ENCODE measurements at regions of chr3 and their contacts with region 1.

Region 1: DNA sequence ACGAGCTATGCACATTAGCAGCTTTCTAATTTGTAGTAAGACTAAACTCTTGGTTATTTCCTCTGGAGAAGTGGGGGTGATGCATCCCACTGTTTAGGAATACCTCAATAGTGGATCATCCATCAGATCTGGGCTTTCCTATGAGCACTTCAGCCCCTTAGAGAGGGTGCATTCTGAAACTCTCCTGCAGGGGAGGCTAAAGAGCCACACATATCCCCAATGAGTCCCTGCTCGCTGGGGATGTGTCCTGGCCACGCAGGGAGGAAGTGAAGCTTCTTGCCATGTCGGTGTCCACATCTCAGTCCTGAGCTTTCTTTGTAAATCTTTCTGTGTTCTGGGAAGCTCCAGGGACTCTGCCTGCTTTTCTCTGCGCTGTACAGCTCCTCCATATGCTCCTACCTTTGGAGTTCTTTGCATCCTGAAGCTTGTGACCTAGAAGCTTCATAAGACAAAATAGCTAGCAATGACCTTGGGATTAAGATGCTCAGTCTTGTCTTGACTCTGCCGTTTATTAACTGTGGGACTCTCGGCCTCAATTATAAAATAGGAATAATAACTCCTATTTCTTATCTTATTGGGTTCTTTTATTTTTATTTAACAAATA is 28.3 kb upstream of the MASP1 start:
- DNase-seq: peak; percentile 74
- ATAC-seq: peak; percentile 81
- H3K4me3 Mint-ChIP-seq: no peak overlapping the region
- H3K27ac Mint-ChIP-seq: no peak overlapping the region
- H3K4me1 Mint-ChIP-seq: peaks cover 11% of the 10 kb centered on the region
- H3K27me3 Mint-ChIP-seq: peaks cover 25% of the 10 kb centered on the region

Region 2: GRCh38 chr3:186732169-186732766 is 587.5 kb before region 1 on chr3:
- CTCF ChIA-PET with region 1: no interaction called
- POLR2A ChIA-PET with region 1: no interaction called
- DNase-seq: no peak
- ATAC-seq: no peak
- H3K4me3 Mint-ChIP-seq: no peak overlapping the region
- H3K27ac Mint-ChIP-seq: no peak overlapping the region
- H3K4me1 Mint-ChIP-seq: peaks cover 4% of the 10 kb centered on the region
- H3K27me3 Mint-ChIP-seq: no peaks in the 10 kb centered on the region

Region 3: GRCh38 chr3:187223799-187224198 is 96.0 kb before region 1 on chr3:
- CTCF ChIA-PET with region 1: interaction called, 38 read pairs
- POLR2A ChIA-PET with region 1: no interaction called
- DNase-seq: no peak
- ATAC-seq: no peak
- H3K4me3 Mint-ChIP-seq: no peak overlapping the region
- H3K27ac Mint-ChIP-seq: no peak overlapping the region
- H3K4me1 Mint-ChIP-seq: no peaks in the 10 kb centered on the region
- H3K27me3 Mint-ChIP-seq: peaks cover 6% of the 10 kb centered on the region

Region 4: GRCh38 chr3:187361835-187362234 is 42.0 kb after region 1 on chr3:
- CTCF ChIA-PET with region 1: interaction called, 45 read pairs
- POLR2A ChIA-PET with region 1: no interaction called
- DNase-seq: no peak
- ATAC-seq: no peak
- H3K4me3 Mint-ChIP-seq: no peak overlapping the region
- H3K27ac Mint-ChIP-seq: no peak overlapping the region
- H3K4me1 Mint-ChIP-seq: peaks cover 12% of the 10 kb centered on the region
- H3K27me3 Mint-ChIP-seq: no peaks in the 10 kb centered on the region

Region 5: GRCh38 chr3:187594272-187594671 is 274.5 kb after region 1 on chr3:
- CTCF ChIA-PET with region 1: interaction called, 10 read pairs
- POLR2A ChIA-PET with region 1: no interaction called
- DNase-seq: no peak
- ATAC-seq: no peak
- H3K4me3 Mint-ChIP-seq: no peak overlapping the region
- H3K27ac Mint-ChIP-seq: no peak overlapping the region
- H3K4me1 Mint-ChIP-seq: no peaks in the 10 kb centered on the region
- H3K27me3 Mint-ChIP-seq: peaks cover 37% of the 10 kb centered on the region

Region 6: DNA sequence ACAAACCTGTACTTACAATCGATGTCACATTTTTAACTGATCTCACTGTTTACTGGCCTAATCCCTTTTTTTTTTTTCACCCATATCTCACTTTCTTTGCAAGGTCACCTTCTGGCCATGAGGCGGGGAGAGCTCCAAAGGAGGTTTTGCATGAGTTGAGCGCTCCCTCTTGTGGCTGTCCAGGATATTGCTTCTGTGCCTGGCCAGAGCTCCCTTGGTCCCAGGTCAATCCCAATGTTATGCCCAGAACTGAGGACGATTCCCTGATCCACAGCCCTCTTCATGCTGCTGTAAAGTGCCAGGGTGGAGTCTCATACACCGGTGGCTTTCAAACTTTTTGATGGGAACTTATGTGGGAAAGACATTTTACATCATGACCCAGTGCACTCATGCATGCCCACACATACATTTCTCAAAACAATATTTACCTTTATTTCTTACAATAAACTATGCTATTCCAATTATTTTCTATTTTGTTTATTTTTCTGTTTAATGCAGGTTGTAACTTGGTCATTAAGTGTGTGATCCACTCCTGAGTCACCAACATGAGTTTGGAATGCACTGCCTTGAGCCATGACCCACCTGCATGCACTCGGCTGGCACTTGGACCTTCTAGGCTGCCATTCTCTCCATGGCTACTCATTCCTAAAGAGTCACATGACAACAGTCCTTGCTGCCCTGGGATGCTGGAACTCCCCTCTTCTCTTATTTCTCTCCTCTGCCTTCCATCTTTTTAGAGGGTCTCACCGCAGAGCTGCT is 360.0 kb after region 1 on chr3:
- CTCF ChIA-PET with region 1: interaction called, 397 read pairs
- POLR2A ChIA-PET with region 1: interaction called, 4 read pairs
- DNase-seq: peak; percentile 73
- ATAC-seq: peak; percentile 80
- H3K4me3 Mint-ChIP-seq: no peak overlapping the region
- H3K27ac Mint-ChIP-seq: no peak overlapping the region
- H3K4me1 Mint-ChIP-seq: peaks cover 2% of the 10 kb centered on the region
- H3K27me3 Mint-ChIP-seq: peaks cover 24% of the 10 kb centered on the region

Region 7: DNA sequence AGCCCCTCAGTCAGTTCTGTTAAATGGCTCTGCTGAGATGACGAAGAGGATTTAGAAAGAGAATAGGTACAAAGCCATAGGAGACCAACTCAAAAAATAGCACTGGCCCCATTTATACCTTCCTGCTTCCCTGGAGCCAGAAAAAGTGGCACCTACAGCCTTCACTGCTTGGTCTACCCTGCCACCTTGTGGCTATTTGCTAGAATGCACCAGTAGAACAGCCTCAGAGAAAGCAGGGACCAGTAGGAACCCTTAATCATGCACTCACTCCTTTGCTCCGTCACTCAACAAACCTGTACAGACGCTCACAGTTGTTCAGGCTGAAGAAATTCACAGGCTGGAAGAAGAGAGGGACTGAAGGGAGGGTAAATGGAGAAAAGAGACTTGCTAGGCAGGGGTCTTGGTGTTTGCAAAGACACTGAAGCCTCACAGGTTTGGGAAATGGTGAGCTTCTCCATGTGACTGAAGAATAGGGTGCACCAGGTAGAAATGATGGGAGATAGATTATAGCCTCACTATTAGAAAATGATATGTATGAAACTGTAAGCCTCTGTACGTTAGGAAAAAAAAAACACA is 394.7 kb after region 1 on chr3:
- CTCF ChIA-PET with region 1: interaction called, 79 read pairs
- POLR2A ChIA-PET with region 1: no interaction called
- DNase-seq: peak; percentile 82
- ATAC-seq: peak; percentile 80
- H3K4me3 Mint-ChIP-seq: no peak overlapping the region
- H3K27ac Mint-ChIP-seq: no peak overlapping the region
- H3K4me1 Mint-ChIP-seq: peaks cover 13% of the 10 kb centered on the region
- H3K27me3 Mint-ChIP-seq: peaks cover 4% of the 10 kb centered on the region

Region 8: DNA sequence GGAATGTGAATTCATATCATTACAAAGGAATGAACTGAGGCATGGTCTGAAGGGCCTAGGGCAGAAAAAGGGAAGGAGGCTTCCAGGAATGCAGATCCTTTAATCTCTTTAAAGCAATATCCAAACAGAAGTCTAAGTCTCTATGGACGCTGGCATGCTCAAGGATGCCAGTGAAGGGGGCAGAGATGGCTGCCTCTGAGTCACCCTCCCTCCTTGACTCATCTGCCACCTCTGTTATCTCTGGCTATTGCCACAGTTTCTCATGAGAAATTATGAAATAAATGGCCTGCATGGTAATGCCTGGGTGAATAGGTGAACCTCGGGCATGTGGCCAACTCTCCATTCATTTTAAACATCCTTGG is 521.8 kb after region 1 on chr3:
- CTCF ChIA-PET with region 1: no interaction called
- POLR2A ChIA-PET with region 1: no interaction called
- DNase-seq: no peak
- ATAC-seq: no peak
- H3K4me3 Mint-ChIP-seq: no peak overlapping the region
- H3K27ac Mint-ChIP-seq: no peak overlapping the region
- H3K4me1 Mint-ChIP-seq: peaks cover 2% of the 10 kb centered on the region
- H3K27me3 Mint-ChIP-seq: no peaks in the 10 kb centered on the region

Measured in activated CD8-positive, alpha-beta T cell treated with anti-CD3 and anti-CD28 coated beads, Interleukin-2, amount 10 ng/mL, durations not matched to agents 7 days and 5 days (primary cell).